ENCODE measurements at regions of chr1 and their contacts with region 1.

Region 1: DNA sequence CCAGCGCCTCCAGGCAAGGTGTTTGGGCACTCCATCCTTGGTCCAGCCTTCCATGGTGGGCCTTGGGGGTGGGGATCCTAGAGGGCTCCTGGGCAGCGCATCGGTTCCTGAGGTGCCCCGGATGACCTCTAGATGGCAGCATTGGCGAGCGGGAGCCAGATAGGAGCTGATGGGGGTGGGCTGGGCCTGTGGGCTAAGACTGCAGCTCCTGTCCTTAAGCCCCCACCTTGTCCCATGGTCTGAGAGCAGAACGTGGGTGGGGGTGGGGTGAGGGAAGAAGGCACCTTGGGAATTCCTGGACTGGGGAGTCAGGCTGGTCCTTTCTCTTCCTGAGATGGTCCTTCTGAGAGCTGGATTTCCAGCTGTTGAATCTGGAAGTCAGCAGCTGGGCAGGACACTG is 93.4 kb upstream of the CSF3R start:
- DNase-seq: peak; percentile 79
- H3K4me3 Mint-ChIP-seq: no peak overlapping the region
- H3K27ac Mint-ChIP-seq: no peak overlapping the region
- H3K4me1 Mint-ChIP-seq: no peaks in the 10 kb centered on the region
- H3K27me3 Mint-ChIP-seq: peaks cover 97% of the 10 kb centered on the region
- CTCF ChIP-seq: peak; percentile 88

Region 2: DNA sequence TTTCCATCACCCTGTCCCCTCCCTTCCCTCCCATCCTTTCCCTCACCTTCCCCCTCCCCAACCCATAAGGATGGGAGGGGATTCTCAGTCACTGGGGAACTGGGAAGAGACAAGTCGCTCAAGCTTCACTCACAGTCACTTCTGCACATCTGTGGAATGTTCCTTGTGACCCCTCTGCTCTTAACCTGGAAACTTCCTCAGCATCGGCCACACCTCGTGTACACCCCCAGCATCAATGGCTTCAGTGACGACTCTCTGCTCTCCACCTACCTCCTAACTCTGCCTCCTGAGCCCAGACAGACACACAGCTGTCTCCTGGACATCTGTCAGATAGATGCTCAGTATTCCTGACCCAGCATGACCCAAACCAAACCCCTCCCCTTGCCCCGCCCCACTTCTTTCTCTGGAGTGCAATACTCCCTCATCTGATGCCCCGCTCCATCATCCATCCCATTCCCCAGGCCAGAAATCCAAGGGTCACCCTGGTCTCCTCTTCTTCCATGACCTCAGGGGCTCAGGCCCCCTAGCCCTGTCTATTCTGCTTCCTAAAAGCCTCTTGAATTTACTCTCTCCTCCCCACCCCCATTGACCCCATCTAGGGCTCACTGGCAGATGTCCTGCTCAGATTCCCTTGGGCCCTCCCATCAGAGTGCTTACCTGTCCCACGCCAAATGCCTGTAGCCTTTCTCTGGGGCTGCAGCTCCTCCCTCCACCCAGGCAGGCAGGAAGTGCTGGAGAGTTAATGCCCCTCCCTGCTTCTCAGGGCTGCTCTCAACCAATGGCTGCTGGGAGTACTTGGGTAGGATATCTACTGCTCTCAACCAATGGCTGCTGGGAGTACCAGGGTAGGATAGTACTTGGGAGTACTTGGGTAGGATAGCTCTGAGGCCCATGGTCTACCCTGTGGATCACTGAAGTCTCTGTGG is 10.3 kb before region 1 on chr1:
- CTCF ChIA-PET with region 1: interaction called, 17 read pairs
- intact Hi-C with region 1: no loop called
- DNase-seq: no peak
- H3K4me3 Mint-ChIP-seq: no peak overlapping the region
- H3K27ac Mint-ChIP-seq: no peak overlapping the region
- H3K4me1 Mint-ChIP-seq: no peaks in the 10 kb centered on the region
- H3K27me3 Mint-ChIP-seq: peaks cover 88% of the 10 kb centered on the region
- CTCF ChIP-seq: no peak

Region 3: DNA sequence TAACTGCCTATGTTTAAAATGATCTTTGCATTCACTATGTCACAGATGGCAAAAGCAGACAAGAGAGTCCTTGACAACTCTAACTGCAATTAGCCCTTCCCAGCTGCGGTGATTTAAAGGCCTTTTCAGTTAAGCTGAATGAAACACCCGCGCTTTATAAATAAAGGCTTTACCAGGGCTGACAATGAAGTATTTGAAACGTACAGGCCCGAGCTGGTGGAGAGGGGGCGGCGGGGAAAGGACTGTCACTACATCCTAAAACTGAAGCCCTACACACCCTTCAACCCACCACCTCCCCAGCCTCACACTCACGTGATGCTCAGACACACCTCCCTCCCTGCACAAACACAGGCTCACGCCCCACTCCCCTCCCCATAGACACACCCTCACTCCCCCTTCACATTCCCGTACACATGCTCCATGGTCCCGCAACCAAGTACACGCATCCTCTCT is 412.6 kb after region 1 on chr1:
- CTCF ChIA-PET with region 1: no interaction called
- intact Hi-C with region 1: no loop called
- DNase-seq: no peak
- H3K4me3 Mint-ChIP-seq: no peak overlapping the region
- H3K27ac Mint-ChIP-seq: no peak overlapping the region
- H3K4me1 Mint-ChIP-seq: no peaks in the 10 kb centered on the region
- H3K27me3 Mint-ChIP-seq: peaks cover 95% of the 10 kb centered on the region
- CTCF ChIP-seq: no peak

Region 4: GRCh38 chr1:37177247-37177864 is 601.2 kb after region 1 on chr1:
- CTCF ChIA-PET with region 1: no interaction called
- intact Hi-C with region 1: loop called (anchors 10 kb)
- DNase-seq: peak; percentile 49
- H3K4me3 Mint-ChIP-seq: no peak overlapping the region
- H3K27ac Mint-ChIP-seq: no peak overlapping the region
- H3K4me1 Mint-ChIP-seq: no peaks in the 10 kb centered on the region
- H3K27me3 Mint-ChIP-seq: peaks cover 90% of the 10 kb centered on the region
- CTCF ChIP-seq: no peak

Region 5: DNA sequence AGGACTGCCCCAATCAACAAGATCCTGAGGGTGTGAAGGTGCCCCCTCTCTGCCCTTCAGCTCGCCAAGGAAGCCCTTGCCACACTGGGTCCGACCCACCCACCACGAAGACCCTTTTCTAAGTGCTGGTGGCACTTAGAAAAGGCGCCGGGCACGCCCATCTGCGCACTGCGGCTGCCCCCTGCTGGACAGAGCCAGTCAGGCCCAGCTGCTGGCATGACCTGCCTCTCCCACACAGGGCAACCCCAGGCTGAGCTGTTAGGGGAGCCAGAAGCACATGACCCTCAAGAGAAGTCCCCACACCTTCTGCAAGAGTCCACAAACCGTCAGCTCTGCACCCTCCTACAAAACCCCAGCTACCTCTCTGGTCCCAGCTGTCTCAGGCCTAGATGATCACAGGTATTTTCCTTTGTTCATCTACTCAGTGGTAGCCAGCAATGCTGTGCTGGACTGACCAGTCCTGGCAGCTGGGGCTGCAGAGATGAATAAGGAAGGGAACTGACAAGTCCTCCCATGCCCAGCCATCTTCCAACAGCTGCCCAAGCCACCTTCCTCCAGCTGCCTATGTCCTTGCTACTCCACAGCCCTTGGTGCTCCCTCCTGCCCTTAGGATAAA is 858.3 kb after region 1 on chr1:
- CTCF ChIA-PET with region 1: interaction called, 6 read pairs
- intact Hi-C with region 1: loop called (anchors 2 kb)
- DNase-seq: peak; percentile 84
- H3K4me3 Mint-ChIP-seq: no peak overlapping the region
- H3K27ac Mint-ChIP-seq: no peak overlapping the region
- H3K4me1 Mint-ChIP-seq: no peaks in the 10 kb centered on the region
- H3K27me3 Mint-ChIP-seq: peaks cover 38% of the 10 kb centered on the region
- CTCF ChIP-seq: peak; percentile 88